SK-N-SH (cell line): ENCODE measurements at regions of chr19 and their contacts with region 1.

Region 1: DNA sequence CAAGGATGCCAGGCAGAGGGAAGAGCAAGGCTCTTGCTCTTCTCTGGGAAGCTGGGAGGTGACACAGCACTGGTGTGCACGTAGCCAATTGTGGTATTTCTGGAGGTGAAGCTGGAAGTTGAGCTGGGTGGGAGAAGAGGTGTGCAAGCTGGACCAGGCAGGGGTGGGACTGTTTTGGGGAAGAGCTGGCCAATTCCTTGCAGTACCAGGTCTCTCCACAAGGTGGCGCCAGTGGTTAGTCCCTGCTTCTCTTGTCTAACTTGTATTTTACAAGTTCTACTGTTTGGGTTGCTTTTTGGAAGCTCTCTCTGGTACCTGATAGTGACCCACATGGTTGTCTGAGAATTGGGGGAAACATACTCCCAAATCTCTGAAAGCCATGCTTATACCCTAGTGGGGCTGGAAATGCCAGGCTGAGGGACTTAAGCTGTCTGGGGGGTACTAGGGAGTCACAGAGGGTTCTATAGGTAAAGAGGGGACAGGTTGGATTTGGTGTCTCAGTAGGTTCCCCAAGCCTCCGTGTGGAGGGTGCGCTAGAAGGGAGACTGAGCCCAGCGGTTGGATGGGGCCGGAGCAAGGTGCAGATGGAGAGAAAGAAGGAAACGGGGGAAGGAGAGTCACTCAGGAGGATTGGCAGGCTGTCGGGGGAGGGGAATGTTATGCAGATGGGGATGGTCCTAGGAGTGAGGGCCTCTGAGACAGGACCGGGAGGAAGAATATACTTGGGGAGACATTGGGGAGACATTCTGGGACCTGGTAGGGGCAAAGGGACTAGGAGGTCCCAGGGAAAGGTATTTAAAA is 3.0 kb downstream of the HPN start:
- DNase-seq: peak; percentile 85
- H3K4me3 ChIP-seq: peak overlapping the region in 1 of 2 experiments; percentile 26; a peak in 1 of 4 replicates
- H3K27ac ChIP-seq: no peak overlapping the region
- H3K4me1 ChIP-seq: peaks cover 0 to 8% of the 10 kb centered on the region in 2 experiments; a peak in 1 of 4 replicates
- H3K27me3 ChIP-seq: no peaks in the 10 kb centered on the region
- CTCF ChIP-seq: peak; percentile 98
- EP300 ChIP-seq: no peak
- RAD21 ChIP-seq: peak; percentile 62

Region 2: DNA sequence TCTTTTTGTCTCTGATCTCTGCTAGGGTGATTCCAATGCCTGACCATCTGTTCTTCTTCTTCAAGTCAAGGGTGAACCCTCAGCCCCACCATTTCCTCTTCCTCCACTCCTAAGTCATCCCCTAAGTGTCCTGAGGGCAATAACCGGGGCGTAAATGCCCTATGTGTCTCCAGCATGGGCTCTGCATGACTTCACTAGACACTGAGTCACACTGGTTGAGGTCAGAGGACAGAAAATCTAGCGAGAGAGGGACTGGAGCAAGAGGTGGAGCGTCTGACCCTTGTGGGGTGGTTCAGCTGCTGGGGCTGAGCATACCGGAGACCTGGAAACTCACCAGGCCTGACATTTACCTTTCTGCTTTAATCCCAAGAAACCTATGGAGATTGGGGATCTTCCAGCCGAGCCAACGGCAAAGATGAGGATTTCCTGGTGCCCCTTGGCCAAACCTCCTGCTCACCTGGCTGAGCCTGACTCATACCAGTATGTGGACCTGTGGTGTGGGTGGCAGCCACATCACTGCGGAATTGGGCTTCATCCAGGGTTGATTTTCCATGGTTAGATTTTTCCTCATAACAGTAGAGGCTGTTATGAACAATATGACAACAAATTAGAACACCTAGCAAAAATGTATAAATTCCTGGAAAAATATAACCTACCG is 394.5 kb before region 1 on chr19:
- CTCF ChIA-PET with region 1: no interaction called
- POLR2A ChIA-PET with region 1: no interaction called
- DNase-seq: no peak
- H3K4me3 ChIP-seq: no peak overlapping the region
- H3K27ac ChIP-seq: no peak overlapping the region
- H3K4me1 ChIP-seq: peaks cover 0 to 29% of the 10 kb centered on the region in 2 experiments; a peak in 2 of 4 replicates
- H3K27me3 ChIP-seq: no peaks in the 10 kb centered on the region
- CTCF ChIP-seq: no peak
- EP300 ChIP-seq: no peak
- RAD21 ChIP-seq: no peak

Region 3: GRCh38 chr19:34953092-34953491 is 91.4 kb before region 1 on chr19:
- CTCF ChIA-PET with region 1: no interaction called
- POLR2A ChIA-PET with region 1: no interaction called
- DNase-seq: no peak
- H3K4me3 ChIP-seq: no peak overlapping the region
- H3K27ac ChIP-seq: no peak overlapping the region
- H3K4me1 ChIP-seq: no peaks in the 10 kb centered on the region
- H3K27me3 ChIP-seq: no peaks in the 10 kb centered on the region
- CTCF ChIP-seq: no peak
- EP300 ChIP-seq: no peak
- RAD21 ChIP-seq: no peak

Region 4: DNA sequence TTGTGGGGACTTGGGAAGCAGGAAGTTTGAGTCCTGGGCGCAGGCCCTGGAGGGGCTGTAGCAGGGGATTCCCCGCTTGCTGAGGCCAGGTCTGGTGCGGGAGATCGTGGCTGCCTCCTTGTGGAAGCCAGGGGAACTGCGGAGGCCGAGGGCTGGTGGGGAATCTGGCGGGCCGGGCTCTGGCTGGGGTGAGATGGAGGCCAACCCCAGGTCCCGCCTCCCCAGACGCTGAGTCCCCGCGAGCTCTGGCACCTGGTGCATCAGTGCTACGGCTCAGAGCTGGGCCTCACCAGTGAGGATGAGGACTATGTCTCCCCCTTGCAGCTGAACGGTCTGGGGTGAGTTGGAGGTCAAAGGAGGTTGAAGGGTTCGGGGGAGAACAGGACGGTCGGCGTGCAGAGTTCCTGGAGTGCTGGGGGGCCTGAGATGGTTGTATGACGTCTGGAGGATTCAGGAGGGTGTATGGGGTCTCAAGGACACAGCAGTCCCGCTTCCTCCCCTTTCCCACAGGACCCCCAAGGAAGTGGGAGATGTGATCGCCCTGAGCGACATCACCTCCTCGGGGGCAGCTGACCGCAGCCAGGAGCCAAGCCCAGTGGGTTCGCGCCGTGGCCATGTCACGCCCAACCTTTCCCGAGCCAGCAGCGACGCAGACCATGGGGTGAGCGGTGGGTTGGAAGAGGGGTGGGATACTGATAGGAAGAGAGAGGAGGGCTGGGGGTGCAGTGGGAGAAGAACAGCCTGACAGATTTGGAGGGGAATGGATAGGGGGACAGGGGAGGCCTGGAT is 31.3 kb before region 1 on chr19:
- CTCF ChIA-PET with region 1: interaction called, 13 read pairs
- POLR2A ChIA-PET with region 1: no interaction called
- DNase-seq: peak; percentile 94
- H3K4me3 ChIP-seq: peak overlapping the region in 1 of 2 experiments; percentile 49; a peak in 1 of 4 replicates
- H3K27ac ChIP-seq: peak overlapping the region in 1 of 2 experiments; percentile 37; a peak in 1 of 4 replicates
- H3K4me1 ChIP-seq: peaks cover 0 to 5% of the 10 kb centered on the region in 2 experiments; a peak in 1 of 4 replicates
- H3K27me3 ChIP-seq: no peaks in the 10 kb centered on the region
- CTCF ChIP-seq: peak; percentile 86
- EP300 ChIP-seq: no peak
- RAD21 ChIP-seq: peak; percentile 78

Region 5: GRCh38 chr19:35030257-35031071 is 14.1 kb before region 1 on chr19 and contains the start of gene SCN1B:
- CTCF ChIA-PET with region 1: interaction called, 49 read pairs
- POLR2A ChIA-PET with region 1: no interaction called
- DNase-seq: peak; percentile 91
- H3K4me3 ChIP-seq: peak within 1 kb of the TSS; percentile 41 to 53
- H3K27ac ChIP-seq: no peak within 1 kb of the TSS
- H3K4me1 ChIP-seq: peaks cover 0 to 21% of the 10 kb centered on the region in 2 experiments; a peak in 1 of 4 replicates
- H3K27me3 ChIP-seq: no peaks in the 10 kb centered on the region
- CTCF ChIP-seq: no peak
- EP300 ChIP-seq: peak in 1 of 2 experiments; percentile 39; a peak in 1 of 4 replicates
- RAD21 ChIP-seq: no peak
- polyA plus RNA-seq, gene SCN1B: 10.3 and 10.5 TPM in 2 replicates

Region 6: GRCh38 chr19:35090506-35091237 is 46.2 kb after region 1 on chr19:
- CTCF ChIA-PET with region 1: interaction called, 12 read pairs
- POLR2A ChIA-PET with region 1: no interaction called
- DNase-seq: peak; percentile 90
- H3K4me3 ChIP-seq: no peak overlapping the region
- H3K27ac ChIP-seq: no peak overlapping the region
- H3K4me1 ChIP-seq: peaks cover 10 to 15% of the 10 kb centered on the region in 2 experiments; a peak in 2 of 4 replicates
- H3K27me3 ChIP-seq: no peaks in the 10 kb centered on the region
- CTCF ChIP-seq: peak; percentile 68
- EP300 ChIP-seq: no peak
- RAD21 ChIP-seq: peak; percentile 71

Region 7: DNA sequence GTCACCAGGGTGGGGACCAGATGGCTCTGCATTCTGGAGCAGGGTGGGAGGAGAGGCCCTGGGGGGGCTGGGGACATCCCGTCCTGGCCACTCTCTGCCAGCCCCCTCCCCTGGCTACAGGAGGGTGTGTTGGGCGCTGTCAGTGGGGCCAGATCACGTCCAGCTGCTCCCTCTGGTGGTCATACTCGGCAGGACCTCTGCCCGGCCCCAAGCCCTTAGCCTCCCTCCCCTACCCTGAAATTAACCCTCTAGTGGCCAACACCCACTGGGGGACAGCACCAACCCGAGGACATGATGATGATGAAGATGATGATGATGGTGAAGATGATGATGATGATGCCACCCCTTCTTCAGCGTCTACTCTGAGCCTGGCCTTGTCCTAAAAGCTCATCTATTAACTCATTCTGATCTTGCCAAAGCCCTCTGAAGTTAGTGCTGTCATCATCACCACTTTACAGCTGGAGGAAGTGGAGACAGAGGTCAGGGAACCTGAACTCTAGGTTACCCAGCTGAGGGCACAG is 90.9 kb after region 1 on chr19:
- CTCF ChIA-PET with region 1: interaction called, 23 read pairs
- POLR2A ChIA-PET with region 1: no interaction called
- DNase-seq: peak; percentile 98
- H3K4me3 ChIP-seq: no peak overlapping the region
- H3K27ac ChIP-seq: no peak overlapping the region
- H3K4me1 ChIP-seq: peaks cover 0 to 7% of the 10 kb centered on the region in 2 experiments; a peak in 1 of 4 replicates
- H3K27me3 ChIP-seq: peaks cover 15% of the 10 kb centered on the region; the same call in 1 of the 2 replicates
- CTCF ChIP-seq: peak; percentile 88
- EP300 ChIP-seq: 0 out of 4 replicates have a peak, but pooled peaks of 1 of the 2 experiments have one; percentile 14
- RAD21 ChIP-seq: peak; percentile 73

Region 8: GRCh38 chr19:35357867-35358573 is 313.5 kb after region 1 on chr19 and contains the start of gene FFAR3:
- CTCF ChIA-PET with region 1: no interaction called
- POLR2A ChIA-PET with region 1: no interaction called
- DNase-seq: no peak
- H3K4me3 ChIP-seq: no peak within 1 kb of the TSS; a peak in 1 of 4 replicates
- H3K27ac ChIP-seq: no peak within 1 kb of the TSS
- H3K4me1 ChIP-seq: peaks cover 0 to 10% of the 10 kb centered on the region in 2 experiments; a peak in 1 of 4 replicates
- H3K27me3 ChIP-seq: peaks cover 70% of the 10 kb centered on the region
- CTCF ChIP-seq: no peak
- EP300 ChIP-seq: no peak
- RAD21 ChIP-seq: no peak
- polyA plus RNA-seq, gene FFAR3: not detected in 2 replicates